ENCODE measurements at regions of chr4 and their contacts with region 1.

Region 1: GRCh38 chr4:68864438-68865187 is 48.8 kb downstream of the UGT2B10 start:
- DNase-seq: peak; percentile 92
- ATAC-seq: peak; percentile 96
- H3K4me3 ChIP-seq: peak overlapping the region in 2 of 3 experiments; percentile 35 to 51; a peak in 3 of 6 replicates
- H3K27ac ChIP-seq: peak overlapping the region; percentile 76
- H3K4me1 ChIP-seq: peaks cover 61% of the 10 kb centered on the region
- H3K27me3 ChIP-seq: no peaks in the 10 kb centered on the region
- CTCF ChIP-seq: 0 out of 2 replicates have a peak, but pooled peaks have one; percentile 10
- EP300 ChIP-seq: peak in 1 of 2 experiments; percentile 86; a peak in 2 of 4 replicates
- POLR2A ChIP-seq: no peak; a peak in 1 of 4 replicates
- RAD21 ChIP-seq: no peak

Region 2: DNA sequence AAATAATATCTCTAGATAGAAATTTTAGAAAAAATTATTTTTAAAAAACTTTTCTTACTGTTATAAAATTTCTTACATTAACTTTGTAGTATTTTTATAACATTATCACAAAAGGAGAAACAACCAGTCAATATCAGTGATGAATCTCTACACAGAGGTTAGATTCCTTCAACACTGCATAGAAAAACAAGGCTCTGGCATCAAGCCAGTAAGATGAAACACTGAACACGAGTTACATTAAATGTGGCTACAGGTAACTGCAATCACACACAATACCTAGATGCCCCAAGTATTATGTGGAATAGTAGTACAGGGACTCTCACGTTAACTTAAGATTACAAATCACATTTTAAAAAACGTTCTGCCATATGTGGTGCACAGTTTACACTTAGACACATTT is 43.8 kb before region 1 on chr4:
- CTCF ChIA-PET with region 1: no interaction called
- POLR2A ChIA-PET with region 1: interaction called, 27 read pairs
- in situ Hi-C with region 1: no loop called
- intact Hi-C with region 1: no loop called
- DNase-seq: no peak
- ATAC-seq: no peak
- H3K4me3 ChIP-seq: no peak overlapping the region
- H3K27ac ChIP-seq: no peak overlapping the region
- H3K4me1 ChIP-seq: peaks cover 77% of the 10 kb centered on the region
- H3K27me3 ChIP-seq: no peaks in the 10 kb centered on the region
- CTCF ChIP-seq: no peak
- EP300 ChIP-seq: no peak
- POLR2A ChIP-seq: no peak
- RAD21 ChIP-seq: no peak

Region 3: GRCh38 chr4:68904786-68905185 is 40.2 kb after region 1 on chr4:
- CTCF ChIA-PET with region 1: no interaction called
- POLR2A ChIA-PET with region 1: no interaction called
- in situ Hi-C with region 1: no loop called
- intact Hi-C with region 1: no loop called
- DNase-seq: peak; percentile 20
- ATAC-seq: peak; percentile 93
- H3K4me3 ChIP-seq: no peak overlapping the region
- H3K27ac ChIP-seq: peak overlapping the region; percentile 13
- H3K4me1 ChIP-seq: peaks cover 49% of the 10 kb centered on the region
- H3K27me3 ChIP-seq: no peaks in the 10 kb centered on the region
- CTCF ChIP-seq: peak; percentile 61
- EP300 ChIP-seq: no peak
- POLR2A ChIP-seq: no peak
- RAD21 ChIP-seq: peak; percentile 38; the same call in 1 of the 2 replicates

Measured in HepG2 (cell line).